ENCODE measurements at regions of chr9 and their contacts with region 1.

Region 1: GRCh38 chr9:124771021-124771866 is at the start of gene NR6A1:
- DNase-seq: peak; percentile 98
- ATAC-seq: peak; percentile 87
- H3K4me3 ChIP-seq: peak within 1 kb of the TSS; percentile 43 to 92 (median 77)
- H3K4me3 Mint-ChIP-seq: peak within 1 kb of the TSS; percentile 97
- H3K27ac ChIP-seq: peak within 1 kb of the TSS; percentile 62 to 68
- H3K27ac Mint-ChIP-seq: peak within 1 kb of the TSS; percentile 95
- H3K4me1 ChIP-seq: peaks cover 29 to 35% of the 10 kb centered on the region in 2 donors
- H3K4me1 Mint-ChIP-seq: peaks cover 39% of the 10 kb centered on the region
- H3K27me3 ChIP-seq: peaks cover 0 to 49% (median 46%) of the 10 kb centered on the region in 4 experiments
- H3K27me3 Mint-ChIP-seq: peaks cover 55% of the 10 kb centered on the region
- CTCF ChIP-seq: peak; percentile 43
- total RNA-seq, gene NR6A1: 0.66 and 0.67 TPM in 2 replicates

Region 2: DNA sequence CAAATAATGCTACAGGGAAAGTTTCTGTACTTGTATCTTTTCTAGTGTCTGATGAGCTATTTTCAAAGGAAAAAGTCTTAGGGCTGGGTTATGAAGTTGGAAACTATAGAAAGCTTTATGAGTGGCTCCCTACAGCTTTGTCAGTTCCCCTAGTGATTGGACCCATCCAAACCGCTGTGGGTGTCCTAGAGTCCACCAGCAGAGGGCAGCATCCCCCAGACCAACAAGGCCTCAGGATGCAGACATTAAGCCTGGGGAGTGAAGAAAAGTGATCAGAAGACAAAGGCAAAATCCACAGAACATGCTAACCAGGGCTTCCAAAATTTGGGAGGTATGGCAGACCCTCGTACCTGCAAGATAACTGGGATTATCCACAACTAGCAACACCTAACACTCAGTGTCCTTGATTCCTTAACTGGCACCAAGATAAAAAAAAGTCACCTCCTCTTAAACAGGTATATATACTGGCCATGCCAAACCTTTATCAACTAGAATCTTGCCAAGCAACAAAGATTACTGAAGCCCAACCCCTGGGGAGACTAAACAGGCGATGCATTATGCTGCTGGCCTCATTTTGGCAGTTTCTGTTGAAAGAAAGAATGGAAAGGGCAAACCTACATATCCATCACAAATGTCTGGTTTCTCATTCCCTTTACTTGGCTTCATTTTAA is 153.6 kb before region 1 on chr9:
- CTCF ChIA-PET with region 1: interaction called, 5 read pairs
- POLR2A ChIA-PET with region 1: no interaction called
- intact Hi-C with region 1: loop called (anchors 2 kb)
- DNase-seq: peak; percentile 76
- ATAC-seq: peak; percentile 61
- H3K4me3 ChIP-seq: no peak overlapping the region
- H3K4me3 Mint-ChIP-seq: no peak overlapping the region
- H3K27ac ChIP-seq: no peak overlapping the region
- H3K27ac Mint-ChIP-seq: no peak overlapping the region
- H3K4me1 ChIP-seq: no peaks in the 10 kb centered on the region
- H3K4me1 Mint-ChIP-seq: no peaks in the 10 kb centered on the region
- H3K27me3 ChIP-seq: no peaks in the 10 kb centered on the region
- H3K27me3 Mint-ChIP-seq: no peaks in the 10 kb centered on the region
- CTCF ChIP-seq: peak; percentile 84

Region 3: DNA sequence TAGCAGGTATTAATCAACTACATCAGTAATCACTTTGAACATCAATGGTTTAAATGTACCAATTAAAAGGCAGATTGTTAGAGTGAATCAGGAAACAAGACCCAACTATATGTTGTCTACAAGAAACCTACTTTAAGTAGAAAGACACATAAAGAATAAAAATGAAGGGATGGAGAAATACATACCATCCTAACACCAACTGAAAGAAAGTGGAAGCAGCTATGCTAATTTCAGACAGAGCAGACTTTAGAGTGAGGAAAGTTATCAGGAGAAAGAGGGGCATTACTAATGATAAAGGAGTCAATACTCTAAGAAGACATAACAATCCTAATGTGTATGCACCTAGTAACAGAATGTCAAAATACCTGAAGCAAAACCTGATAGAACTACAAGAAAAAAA is 126.0 kb before region 1 on chr9:
- CTCF ChIA-PET with region 1: no interaction called
- POLR2A ChIA-PET with region 1: no interaction called
- intact Hi-C with region 1: no loop called
- DNase-seq: no peak
- ATAC-seq: no peak
- H3K4me3 ChIP-seq: no peak overlapping the region
- H3K4me3 Mint-ChIP-seq: no peak overlapping the region
- H3K27ac ChIP-seq: no peak overlapping the region
- H3K27ac Mint-ChIP-seq: no peak overlapping the region
- H3K4me1 ChIP-seq: no peaks in the 10 kb centered on the region
- H3K4me1 Mint-ChIP-seq: no peaks in the 10 kb centered on the region
- H3K27me3 ChIP-seq: no peaks in the 10 kb centered on the region
- H3K27me3 Mint-ChIP-seq: no peaks in the 10 kb centered on the region
- CTCF ChIP-seq: no peak

Region 4: GRCh38 chr9:124839612-124840299 is 68.5 kb after region 1 on chr9:
- CTCF ChIA-PET with region 1: interaction called, 29 read pairs
- POLR2A ChIA-PET with region 1: no interaction called
- intact Hi-C with region 1: no loop called
- DNase-seq: peak; percentile 18
- ATAC-seq: no peak
- H3K4me3 ChIP-seq: no peak overlapping the region
- H3K4me3 Mint-ChIP-seq: no peak overlapping the region
- H3K27ac ChIP-seq: no peak overlapping the region
- H3K27ac Mint-ChIP-seq: no peak overlapping the region
- H3K4me1 ChIP-seq: no peaks in the 10 kb centered on the region
- H3K4me1 Mint-ChIP-seq: no peaks in the 10 kb centered on the region
- H3K27me3 ChIP-seq: peaks cover 0 to 6% (median 0%) of the 10 kb centered on the region in 4 experiments
- H3K27me3 Mint-ChIP-seq: peaks cover 12% of the 10 kb centered on the region
- CTCF ChIP-seq: peak; percentile 24

Region 5: GRCh38 chr9:124861342-124862229 is 90.3 kb after region 1 on chr9 and contains the starts of genes ARPC5L and RPL35:
- CTCF ChIA-PET with region 1: interaction called, 345 read pairs
- POLR2A ChIA-PET with region 1: interaction called, 6 read pairs
- intact Hi-C with region 1: loop called (anchors 1 kb)
- DNase-seq: peak; percentile 96
- ATAC-seq: peak; percentile 96
- H3K4me3 ChIP-seq: peak within 1 kb of the TSS; percentile 43 to 91 (median 81)
- H3K4me3 Mint-ChIP-seq: peak within 1 kb of the TSS; percentile 99
- H3K27ac ChIP-seq: peak within 1 kb of the TSS; percentile 88 to 93
- H3K27ac Mint-ChIP-seq: peak within 1 kb of the TSS; percentile 98
- H3K4me1 ChIP-seq: peaks cover 18 to 34% of the 10 kb centered on the region in 2 donors
- H3K4me1 Mint-ChIP-seq: peaks cover 28% of the 10 kb centered on the region
- H3K27me3 ChIP-seq: no peaks in the 10 kb centered on the region
- H3K27me3 Mint-ChIP-seq: no peaks in the 10 kb centered on the region
- CTCF ChIP-seq: peak; percentile 48
- total RNA-seq, gene ARPC5L: 37.3 and 41.2 TPM in 2 replicates
- total RNA-seq, gene RPL35: 1,533 and 1,609 TPM in 2 replicates

Region 6: GRCh38 chr9:124940693-124941453 is 169.6 kb after region 1 on chr9 and contains the start of gene GOLGA1:
- CTCF ChIA-PET with region 1: interaction called, 4 read pairs
- POLR2A ChIA-PET with region 1: no interaction called
- intact Hi-C with region 1: loop called (anchors 1 kb)
- DNase-seq: peak; percentile 98
- ATAC-seq: peak; percentile 88
- H3K4me3 ChIP-seq: peak within 1 kb of the TSS; percentile 73 to 95 (median 91)
- H3K4me3 Mint-ChIP-seq: peak within 1 kb of the TSS; percentile 85
- H3K27ac ChIP-seq: peak within 1 kb of the TSS; percentile 98
- H3K27ac Mint-ChIP-seq: peak within 1 kb of the TSS; percentile 90
- H3K4me1 ChIP-seq: peaks cover 16 to 17% of the 10 kb centered on the region in 2 donors
- H3K4me1 Mint-ChIP-seq: peaks cover 26% of the 10 kb centered on the region
- H3K27me3 ChIP-seq: no peaks in the 10 kb centered on the region
- H3K27me3 Mint-ChIP-seq: no peaks in the 10 kb centered on the region
- CTCF ChIP-seq: no peak
- total RNA-seq, gene GOLGA1: 24.6 and 26.2 TPM in 2 replicates

Region 7: GRCh38 chr9:125189361-125190289 is 418.4 kb after region 1 on chr9 and contains the start of gene PPP6C:
- CTCF ChIA-PET with region 1: no interaction called
- POLR2A ChIA-PET with region 1: no interaction called
- intact Hi-C with region 1: loop called (anchors 1 kb)
- DNase-seq: peak; percentile 98
- ATAC-seq: peak; percentile 98
- H3K4me3 ChIP-seq: peak within 1 kb of the TSS; percentile 89 to 99 (median 99)
- H3K4me3 Mint-ChIP-seq: peak within 1 kb of the TSS; percentile 97
- H3K27ac ChIP-seq: peak within 1 kb of the TSS; percentile 91 to 98
- H3K27ac Mint-ChIP-seq: peak within 1 kb of the TSS; percentile 96
- H3K4me1 ChIP-seq: peaks cover 19 to 27% of the 10 kb centered on the region in 2 donors
- H3K4me1 Mint-ChIP-seq: peaks cover 39% of the 10 kb centered on the region
- H3K27me3 ChIP-seq: no peaks in the 10 kb centered on the region
- H3K27me3 Mint-ChIP-seq: no peaks in the 10 kb centered on the region
- CTCF ChIP-seq: peak; percentile 78
- total RNA-seq, gene PPP6C: 36.1 and 38.6 TPM in 2 replicates

Region 8: GRCh38 chr9:125261501-125262293 is 490.5 kb after region 1 on chr9 and contains the start of gene GAPVD1:
- CTCF ChIA-PET with region 1: no interaction called
- POLR2A ChIA-PET with region 1: no interaction called
- intact Hi-C with region 1: loop called (anchors 5 kb)
- DNase-seq: peak; percentile 98
- ATAC-seq: peak; percentile 93
- H3K4me3 ChIP-seq: peak within 1 kb of the TSS; percentile 74 to 100 (median 88)
- H3K4me3 Mint-ChIP-seq: peak within 1 kb of the TSS; percentile 99
- H3K27ac ChIP-seq: peak within 1 kb of the TSS; percentile 96 to 100
- H3K27ac Mint-ChIP-seq: peak within 1 kb of the TSS; percentile 100
- H3K4me1 ChIP-seq: peaks cover 20 to 27% of the 10 kb centered on the region in 2 donors
- H3K4me1 Mint-ChIP-seq: peaks cover 42% of the 10 kb centered on the region
- H3K27me3 ChIP-seq: no peaks in the 10 kb centered on the region
- H3K27me3 Mint-ChIP-seq: no peaks in the 10 kb centered on the region
- CTCF ChIP-seq: peak; percentile 47
- total RNA-seq, gene GAPVD1: 61.2 and 65.3 TPM in 2 replicates

Measured in B cell (primary cell).